ENCODE measurements at regions of chr1 and their contacts with region 1.

Region 1: DNA sequence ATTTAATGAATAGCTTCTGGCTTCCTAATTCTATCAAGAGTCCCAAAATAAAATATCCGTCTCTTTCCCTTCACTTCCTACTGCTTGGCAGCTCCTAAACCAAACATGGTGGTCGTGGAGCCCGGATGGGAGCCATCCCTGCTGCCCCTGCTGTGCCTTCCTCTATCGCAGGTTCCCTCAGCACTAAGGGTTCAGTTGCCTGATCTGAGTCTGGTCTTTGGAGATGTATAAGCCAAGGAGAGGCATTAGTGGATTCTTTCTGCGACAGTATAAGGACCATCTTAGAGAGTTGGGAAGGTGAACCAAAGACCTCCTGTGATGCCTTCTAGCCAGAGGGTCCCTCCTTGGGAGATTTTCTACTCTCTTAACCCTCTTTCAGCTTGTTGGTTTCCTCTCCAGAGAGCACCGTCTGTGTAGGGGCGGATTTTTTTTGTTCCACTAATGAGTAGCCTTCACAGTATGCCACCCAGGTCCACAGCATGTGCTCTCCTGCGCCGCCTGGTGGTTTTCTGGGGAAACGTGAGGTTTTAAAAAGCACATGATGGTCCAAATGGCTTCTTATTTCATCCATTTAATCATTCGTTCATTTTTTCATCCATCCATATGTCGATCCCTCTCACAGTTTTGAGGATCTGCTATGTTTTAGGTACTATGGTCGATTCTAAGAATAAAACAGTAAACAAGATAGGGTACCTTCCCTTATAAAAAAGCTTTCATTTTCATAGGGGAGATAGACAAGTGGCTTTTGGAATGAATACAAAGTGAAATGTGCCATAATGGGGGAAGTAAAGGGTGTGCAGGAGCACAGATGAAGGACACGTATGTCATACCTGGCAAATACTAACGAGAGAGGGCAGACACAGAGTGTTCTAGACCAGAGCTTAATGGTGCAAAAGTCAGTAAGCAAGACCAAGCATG is 71.0 kb downstream of the NFASC start:
- DNase-seq: peak; percentile 62 to 73
- ATAC-seq: peak; percentile 53 to 74 (median 68)
- H3K4me3 ChIP-seq: no peak overlapping the region
- H3K27ac ChIP-seq: no peak overlapping the region
- H3K4me1 ChIP-seq: no peaks in the 10 kb centered on the region
- H3K27me3 ChIP-seq: peaks cover 0 to 6% (median 1%) of the 10 kb centered on the region in 3 donors
- CTCF ChIP-seq: peak; percentile 88

Region 2: DNA sequence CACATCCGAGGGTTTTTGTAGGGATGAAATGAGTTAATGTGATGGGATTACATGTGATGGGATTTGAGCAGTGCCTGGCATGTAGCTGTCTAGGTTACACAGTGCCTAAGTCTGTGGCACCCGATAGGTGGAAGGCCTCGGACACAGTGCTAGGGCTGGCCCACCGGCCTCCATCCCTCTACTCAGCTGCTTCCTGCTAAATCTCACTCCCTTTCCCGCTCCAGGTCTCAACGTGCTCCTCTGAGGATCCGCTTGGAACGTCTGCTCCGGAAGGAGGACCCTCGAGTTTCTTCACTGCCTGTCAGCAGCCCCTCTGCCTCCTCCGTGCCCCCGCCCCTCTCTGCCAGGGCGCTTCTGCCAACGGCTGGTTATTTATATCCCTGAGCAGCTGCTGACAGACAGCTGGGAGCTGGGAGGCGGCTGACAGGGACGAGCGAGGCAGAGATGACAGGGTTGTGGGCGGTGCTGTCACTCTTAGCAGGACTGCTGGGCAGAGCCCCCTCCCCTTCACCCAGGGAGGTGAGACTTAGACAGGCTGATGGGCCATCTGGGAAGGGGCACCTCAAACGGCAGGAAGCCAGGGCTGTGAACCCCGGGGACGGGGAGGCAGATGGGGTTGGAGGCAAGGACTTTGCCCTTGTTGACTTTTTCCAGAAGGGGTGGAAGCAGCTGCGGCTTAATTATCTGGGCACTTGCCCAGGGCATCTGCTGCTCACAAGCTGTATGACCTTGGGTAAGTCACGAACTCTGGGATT is 229.6 kb before region 1 on chr1:
- intact Hi-C with region 1: no loop called
- DNase-seq: peak; percentile 38 to 62
- ATAC-seq: peak; percentile 89 to 94 (median 93)
- H3K4me3 ChIP-seq: no peak overlapping the region
- H3K27ac ChIP-seq: no peak overlapping the region
- H3K4me1 ChIP-seq: no peaks in the 10 kb centered on the region
- H3K27me3 ChIP-seq: peaks cover 0 to 32% (median 0%) of the 10 kb centered on the region in 3 donors
- CTCF ChIP-seq: no peak

Region 3: GRCh38 chr1:204806943-204807687 is 134.6 kb before region 1 on chr1:
- intact Hi-C with region 1: loop called (anchors 5 kb)
- DNase-seq: peak; percentile 82 to 86
- ATAC-seq: peak; percentile 92 to 98 (median 94)
- H3K4me3 ChIP-seq: peak overlapping the region; percentile 60
- H3K27ac ChIP-seq: no peak overlapping the region
- H3K4me1 ChIP-seq: no peaks in the 10 kb centered on the region
- H3K27me3 ChIP-seq: no peaks in the 10 kb centered on the region
- CTCF ChIP-seq: peak; percentile 84

Region 4: DNA sequence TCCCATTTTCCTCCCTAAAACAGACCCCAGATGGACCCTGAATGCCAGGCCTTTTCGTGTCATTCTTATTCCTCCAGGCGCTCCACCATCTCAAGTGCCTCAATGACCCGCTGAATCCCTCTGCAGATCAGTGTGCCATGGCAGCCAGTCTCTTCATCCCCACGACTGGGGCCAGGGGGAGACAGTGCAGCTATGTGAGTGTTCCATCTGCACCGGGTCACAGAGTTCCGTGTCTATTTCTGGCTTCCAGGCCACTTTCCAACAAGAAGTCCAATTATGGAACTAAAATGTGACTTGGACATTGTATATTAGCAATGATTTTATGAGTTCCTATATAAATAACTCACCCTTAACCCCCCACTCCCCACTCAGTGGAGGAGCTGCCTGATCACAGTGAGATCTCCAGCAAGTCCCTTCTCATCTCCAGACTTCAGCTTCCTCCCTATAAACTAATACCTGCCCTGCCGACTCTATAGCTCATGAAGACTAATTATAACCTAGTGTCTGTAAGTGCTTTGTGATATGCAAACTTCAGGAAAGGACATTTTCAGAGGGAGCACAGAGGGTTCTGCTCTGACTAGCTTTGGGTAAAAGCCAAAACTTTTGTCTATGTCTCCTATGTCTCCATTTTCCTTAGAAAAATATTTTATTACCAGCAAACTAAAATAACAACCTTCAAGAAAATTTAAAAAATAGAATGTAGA is 127.3 kb before region 1 on chr1:
- intact Hi-C with region 1: loop called (anchors 5 kb)
- DNase-seq: no peak
- ATAC-seq: peak in 1 of 4 donors; percentile 64
- H3K4me3 ChIP-seq: no peak overlapping the region
- H3K27ac ChIP-seq: no peak overlapping the region
- H3K4me1 ChIP-seq: peaks cover 8% of the 10 kb centered on the region
- H3K27me3 ChIP-seq: no peaks in the 10 kb centered on the region
- CTCF ChIP-seq: no peak

Measured in psoas muscle (tissue), 8 donors.